Ovary (tissue), 10 donors: ENCODE measurements at regions of chr18 and their contacts with region 1.

Region 1: GRCh38 chr18:12038639-12039417 is 54.8 kb upstream of the ANKRD62 start:
- DNase-seq: peak; percentile 68 to 86 (median 81)
- H3K4me3 ChIP-seq: peak overlapping the region; percentile 47
- H3K27ac ChIP-seq: peak overlapping the region in 1 of 2 donors; percentile 4
- H3K4me1 ChIP-seq: peaks cover 1% of the 10 kb centered on the region
- H3K27me3 ChIP-seq: no peaks in the 10 kb centered on the region
- CTCF ChIP-seq: peak; percentile 93 to 98 (median 98)
- EP300 ChIP-seq: no peak
- POLR2A ChIP-seq: no peak

Region 2: DNA sequence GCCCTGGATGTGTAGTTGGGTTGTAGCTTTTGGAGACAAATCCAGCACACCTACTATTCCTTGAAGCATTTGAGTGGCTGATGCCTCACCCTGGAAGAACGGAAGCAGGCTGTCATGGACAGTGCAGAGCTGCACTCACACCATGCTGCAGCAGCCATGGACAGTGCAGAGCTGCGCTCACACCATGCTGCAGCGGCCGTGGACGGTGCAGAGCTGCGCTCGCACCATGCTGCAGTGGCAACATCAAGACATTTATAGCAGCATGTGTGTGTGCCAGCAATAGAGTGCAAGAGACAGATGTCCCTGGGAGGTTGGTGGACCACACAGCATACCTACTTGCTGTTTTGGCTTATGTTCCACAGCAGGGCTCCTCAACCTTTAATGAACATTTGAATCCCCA is 319.2 kb before region 1 on chr18:
- intact Hi-C with region 1: loop called in 1 of 4 experiments (anchors 5 kb)
- DNase-seq: no peak
- H3K4me3 ChIP-seq: no peak overlapping the region
- H3K27ac ChIP-seq: no peak overlapping the region
- H3K4me1 ChIP-seq: no peaks in the 10 kb centered on the region
- H3K27me3 ChIP-seq: no peaks in the 10 kb centered on the region
- CTCF ChIP-seq: no peak
- EP300 ChIP-seq: no peak
- POLR2A ChIP-seq: no peak

Region 3: DNA sequence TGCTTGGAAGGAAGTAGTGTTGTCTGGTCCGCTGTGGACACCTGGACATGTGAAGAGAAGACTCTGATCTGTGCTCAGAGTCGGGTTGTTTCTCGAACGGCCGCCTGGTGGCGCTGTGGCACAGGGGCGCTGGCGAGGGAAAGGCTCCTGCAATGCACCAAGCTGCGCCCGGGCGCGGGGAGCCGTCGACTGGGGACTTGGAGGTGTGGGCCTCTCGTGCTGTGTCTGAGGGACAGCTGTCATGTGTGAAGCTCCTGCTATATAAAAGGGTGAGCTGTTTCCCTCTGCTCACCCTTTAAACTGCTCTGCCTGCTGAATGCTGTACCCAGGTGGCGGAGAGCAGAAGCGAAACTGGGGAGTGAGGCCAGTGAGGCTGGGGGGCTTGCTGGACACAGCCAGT is 305.8 kb before region 1 on chr18:
- intact Hi-C with region 1: loop called in 3 of 4 experiments (anchors 5 to 10 kb)
- DNase-seq: peak; percentile 48 to 82 (median 72)
- H3K4me3 ChIP-seq: no peak overlapping the region
- H3K27ac ChIP-seq: no peak overlapping the region
- H3K4me1 ChIP-seq: no peaks in the 10 kb centered on the region
- H3K27me3 ChIP-seq: no peaks in the 10 kb centered on the region
- CTCF ChIP-seq: peak; percentile 43 to 66 (median 56)
- EP300 ChIP-seq: no peak
- POLR2A ChIP-seq: no peak

Region 4: GRCh38 chr18:11937874-11938478 is 100.9 kb before region 1 on chr18:
- intact Hi-C with region 1: loop called in 3 of 4 experiments (anchors 1 to 10 kb)
- DNase-seq: peak; percentile 61 to 81 (median 79)
- H3K4me3 ChIP-seq: no peak overlapping the region
- H3K27ac ChIP-seq: no peak overlapping the region
- H3K4me1 ChIP-seq: no peaks in the 10 kb centered on the region
- H3K27me3 ChIP-seq: no peaks in the 10 kb centered on the region
- CTCF ChIP-seq: peak; percentile 70 to 86 (median 83)
- EP300 ChIP-seq: no peak
- POLR2A ChIP-seq: no peak

Region 5: DNA sequence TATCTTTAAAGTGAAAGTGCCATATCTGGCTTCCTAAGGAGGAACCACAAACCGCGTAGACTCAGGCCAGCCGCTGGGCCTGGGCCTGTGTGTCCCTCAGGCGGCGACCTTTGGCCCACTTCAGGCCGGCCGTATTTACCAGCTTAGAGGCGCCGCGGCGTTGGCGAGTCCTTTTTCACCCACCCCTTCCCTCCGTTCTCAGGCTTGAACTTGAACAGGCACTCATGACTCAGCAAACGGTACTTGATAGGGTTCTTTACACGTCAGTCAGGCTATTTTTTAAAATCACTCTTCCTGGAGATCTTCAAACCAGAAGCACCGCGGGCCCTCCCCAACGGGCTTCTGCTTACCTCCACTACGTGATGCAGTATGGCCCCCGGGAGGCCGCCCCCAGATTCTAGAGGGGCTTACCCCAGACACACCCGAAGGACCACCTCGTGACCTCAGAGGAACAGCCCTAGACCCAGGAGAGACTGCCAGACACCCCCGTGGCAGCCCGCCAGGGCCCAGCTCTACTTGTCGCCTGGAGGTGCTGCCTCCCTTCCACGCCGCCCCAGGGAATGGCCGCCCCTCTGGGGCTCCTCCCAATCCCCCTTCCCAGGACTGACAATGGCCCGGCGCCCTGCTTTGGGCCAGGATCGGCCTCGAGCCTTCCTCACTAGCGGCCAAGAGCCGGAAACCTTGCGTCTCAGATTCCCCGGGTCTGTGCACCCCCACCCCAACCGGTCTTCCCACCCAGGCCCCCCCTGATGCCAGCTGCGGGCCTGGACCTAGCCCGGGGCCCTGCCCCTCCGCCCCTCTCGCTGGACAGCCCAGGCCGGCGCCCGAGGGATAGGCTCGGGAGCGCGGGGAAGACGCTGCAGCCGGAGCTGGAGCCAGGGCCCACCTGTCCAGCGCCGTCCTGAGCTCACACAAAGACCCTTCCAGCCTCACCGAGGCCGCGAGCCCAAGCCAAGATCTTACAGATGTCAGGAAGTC is 91.3 kb before region 1 on chr18:
- intact Hi-C with region 1: loop called in 1 of 4 experiments (anchors 10 kb)
- DNase-seq: peak; percentile 88 to 95 (median 92)
- H3K4me3 ChIP-seq: peak overlapping the region; percentile 48
- H3K27ac ChIP-seq: peak overlapping the region; percentile 91 to 95
- H3K4me1 ChIP-seq: no peaks in the 10 kb centered on the region
- H3K27me3 ChIP-seq: no peaks in the 10 kb centered on the region
- CTCF ChIP-seq: no peak
- EP300 ChIP-seq: peak; percentile 9
- POLR2A ChIP-seq: peak; percentile 72

Region 6: GRCh38 chr18:11980555-11981382 is 58.1 kb before region 1 on chr18:
- intact Hi-C with region 1: no loop called
- DNase-seq: peak; percentile 97 to 99 (median 98)
- H3K4me3 ChIP-seq: peak overlapping the region; percentile 92
- H3K27ac ChIP-seq: peak overlapping the region; percentile 72 to 99
- H3K4me1 ChIP-seq: no peaks in the 10 kb centered on the region
- H3K27me3 ChIP-seq: no peaks in the 10 kb centered on the region
- CTCF ChIP-seq: peak in 2 of 3 donors; percentile 29 to 34
- EP300 ChIP-seq: no peak
- POLR2A ChIP-seq: peak; percentile 83

Region 7: GRCh38 chr18:11995445-11996189 is 43.2 kb before region 1 on chr18:
- intact Hi-C with region 1: loop called in 2 of 4 experiments (anchors 5 kb)
- DNase-seq: peak; percentile 53 to 77 (median 66)
- H3K4me3 ChIP-seq: no peak overlapping the region
- H3K27ac ChIP-seq: peak overlapping the region in 1 of 2 donors; percentile 15
- H3K4me1 ChIP-seq: peaks cover 7% of the 10 kb centered on the region
- H3K27me3 ChIP-seq: no peaks in the 10 kb centered on the region
- CTCF ChIP-seq: peak; percentile 21 to 49 (median 45)
- EP300 ChIP-seq: no peak
- POLR2A ChIP-seq: no peak